A549 (cell line): ENCODE measurements at regions of chr1 and their contacts with region 1.

Region 1: DNA sequence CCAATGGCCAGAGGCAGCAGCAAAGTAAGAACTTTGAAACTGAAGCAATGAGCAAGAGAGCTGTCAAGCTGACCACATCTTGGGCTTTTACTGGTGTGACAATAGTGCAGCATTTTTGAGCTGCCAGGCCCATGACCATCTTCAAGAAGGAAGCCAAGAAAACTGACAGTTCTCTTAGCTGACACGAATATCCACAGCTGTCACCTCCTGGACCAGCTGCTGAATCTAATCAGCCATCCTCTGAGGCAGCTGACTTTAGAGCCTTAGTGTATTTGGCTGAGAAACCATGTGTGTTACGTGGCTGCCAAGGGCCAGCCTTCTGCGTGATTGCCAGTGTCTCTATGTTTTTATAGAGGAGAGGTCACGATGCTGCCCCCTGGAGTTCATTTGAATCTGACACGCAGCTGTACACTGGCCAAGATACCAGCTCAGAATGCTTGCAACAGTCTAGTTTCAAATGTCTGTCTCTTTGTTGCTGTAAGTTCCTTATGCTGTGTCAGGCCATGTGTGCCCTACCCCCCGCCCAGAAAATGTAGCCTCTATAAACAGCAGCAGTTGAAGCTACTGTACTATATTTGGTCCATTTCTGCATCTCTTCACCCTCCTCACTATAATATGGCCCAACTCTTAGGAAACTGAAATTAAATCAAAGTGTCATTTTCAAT is 39.7 kb downstream of the PALMD start:
- DNase-seq: peak; percentile 9 to 64
- ATAC-seq: peak; percentile 85 to 94
- H3K4me3 ChIP-seq: no peak overlapping the region
- H3K27ac ChIP-seq: 0 out of 6 replicates have a peak overlapping the region, but pooled peaks of 1 of the 2 experiments have one; percentile 30
- H3K4me1 ChIP-seq: peaks cover 15% of the 10 kb centered on the region; the same call in 2 of the 3 replicates
- CTCF ChIP-seq: peak; percentile 48
- EP300 ChIP-seq: no peak
- POLR2A ChIP-seq: no peak
- RAD21 ChIP-seq: peak; percentile 47 to 49

Region 2: DNA sequence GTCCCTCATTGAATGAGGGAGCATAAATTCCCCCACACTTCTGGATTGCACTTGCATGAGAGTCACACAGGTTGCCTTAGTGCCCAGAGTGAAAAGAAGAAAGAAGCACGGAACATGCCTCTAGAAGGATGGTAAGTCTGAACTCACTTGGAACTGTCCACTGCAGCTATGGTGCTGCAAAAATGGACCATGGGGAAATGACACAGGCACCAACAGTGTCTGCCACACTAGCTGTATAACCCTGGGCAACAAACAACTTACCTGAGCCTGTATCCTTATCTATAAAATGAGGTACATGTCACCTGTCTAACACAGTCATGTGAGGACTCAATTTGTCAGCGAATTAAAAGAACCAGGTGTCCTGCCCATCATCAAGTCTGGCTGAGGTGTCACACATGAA is 11.0 kb after region 1 on chr1:
- CTCF ChIA-PET with region 1: interaction called, 14 read pairs
- POLR2A ChIA-PET with region 1: no interaction called
- DNase-seq: no peak
- ATAC-seq: no peak
- H3K4me3 ChIP-seq: no peak overlapping the region
- H3K27ac ChIP-seq: no peak overlapping the region
- H3K4me1 ChIP-seq: no peaks in the 10 kb centered on the region
- CTCF ChIP-seq: no peak
- EP300 ChIP-seq: no peak
- POLR2A ChIP-seq: no peak
- RAD21 ChIP-seq: no peak